ENCODE measurements at regions of chr5 and their contacts with region 1.

Region 1: GRCh38 chr5:29905626-29906353 is 1287.7 kb upstream of the CDH6 start:
- DNase-seq: no peak
- ATAC-seq: no peak
- H3K4me3 ChIP-seq: no peak overlapping the region
- H3K27ac ChIP-seq: no peak overlapping the region
- H3K4me1 ChIP-seq: no peaks in the 10 kb centered on the region
- H3K27me3 ChIP-seq: no peaks in the 10 kb centered on the region
- CTCF ChIP-seq: no peak
- POLR2A ChIP-seq: no peak

Region 2: DNA sequence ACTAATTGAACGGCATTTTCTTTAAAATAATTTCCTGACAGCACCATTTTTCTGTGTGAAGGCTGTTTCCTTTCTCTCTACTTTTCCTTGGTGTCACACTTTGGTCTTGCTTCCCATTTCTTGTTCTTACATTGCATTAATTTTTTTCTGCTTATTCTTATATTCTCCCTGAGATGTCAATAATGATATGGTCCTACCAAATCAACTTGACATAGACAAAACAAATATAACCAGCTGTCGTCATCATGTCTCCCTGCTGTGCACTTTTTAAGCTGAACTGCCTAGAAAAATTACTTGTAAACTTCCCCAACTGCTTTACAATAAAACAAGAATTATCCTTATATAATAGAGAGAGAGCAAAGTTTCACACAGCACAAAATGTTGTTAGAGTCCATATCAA is 45.9 kb before region 1 on chr5:
- in situ Hi-C with region 1: no loop called
- intact Hi-C with region 1: loop called (anchors 2 kb)
- DNase-seq: no peak
- ATAC-seq: no peak
- H3K4me3 ChIP-seq: no peak overlapping the region
- H3K27ac ChIP-seq: no peak overlapping the region
- H3K4me1 ChIP-seq: no peaks in the 10 kb centered on the region
- H3K27me3 ChIP-seq: no peaks in the 10 kb centered on the region
- CTCF ChIP-seq: no peak
- POLR2A ChIP-seq: no peak

Region 3: DNA sequence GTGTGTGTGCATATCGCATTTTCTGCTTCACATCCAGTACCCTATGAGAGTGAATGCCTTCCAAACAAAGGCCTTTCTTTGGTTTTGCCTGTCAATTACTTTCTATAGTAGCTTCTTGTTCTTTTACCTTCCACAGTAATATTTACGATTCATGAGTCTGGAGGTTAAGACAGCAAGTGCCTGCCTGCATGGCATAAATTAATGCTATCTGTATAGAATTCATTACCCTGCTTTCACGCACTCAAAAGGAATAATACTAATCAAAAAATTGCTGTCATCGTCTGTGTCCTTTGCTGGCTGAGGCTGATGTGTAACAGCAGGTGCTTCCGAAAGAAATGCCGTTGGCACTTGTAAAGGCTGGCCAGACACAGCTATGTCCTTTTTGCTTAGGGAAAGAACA is 16.7 kb before region 1 on chr5:
- in situ Hi-C with region 1: no loop called
- intact Hi-C with region 1: no loop called
- DNase-seq: no peak
- ATAC-seq: no peak
- H3K4me3 ChIP-seq: no peak overlapping the region
- H3K27ac ChIP-seq: no peak overlapping the region
- H3K4me1 ChIP-seq: no peaks in the 10 kb centered on the region
- H3K27me3 ChIP-seq: no peaks in the 10 kb centered on the region
- CTCF ChIP-seq: no peak
- POLR2A ChIP-seq: no peak

Measured in gastrocnemius medialis (tissue), 4 donors.